Activated CD8-positive, alpha-beta T cell treated with anti-CD3 and anti-CD28 coated beads for 36 hours (primary cell): ENCODE measurements at regions of chr2 and their contacts with region 1.

Region 1: DNA sequence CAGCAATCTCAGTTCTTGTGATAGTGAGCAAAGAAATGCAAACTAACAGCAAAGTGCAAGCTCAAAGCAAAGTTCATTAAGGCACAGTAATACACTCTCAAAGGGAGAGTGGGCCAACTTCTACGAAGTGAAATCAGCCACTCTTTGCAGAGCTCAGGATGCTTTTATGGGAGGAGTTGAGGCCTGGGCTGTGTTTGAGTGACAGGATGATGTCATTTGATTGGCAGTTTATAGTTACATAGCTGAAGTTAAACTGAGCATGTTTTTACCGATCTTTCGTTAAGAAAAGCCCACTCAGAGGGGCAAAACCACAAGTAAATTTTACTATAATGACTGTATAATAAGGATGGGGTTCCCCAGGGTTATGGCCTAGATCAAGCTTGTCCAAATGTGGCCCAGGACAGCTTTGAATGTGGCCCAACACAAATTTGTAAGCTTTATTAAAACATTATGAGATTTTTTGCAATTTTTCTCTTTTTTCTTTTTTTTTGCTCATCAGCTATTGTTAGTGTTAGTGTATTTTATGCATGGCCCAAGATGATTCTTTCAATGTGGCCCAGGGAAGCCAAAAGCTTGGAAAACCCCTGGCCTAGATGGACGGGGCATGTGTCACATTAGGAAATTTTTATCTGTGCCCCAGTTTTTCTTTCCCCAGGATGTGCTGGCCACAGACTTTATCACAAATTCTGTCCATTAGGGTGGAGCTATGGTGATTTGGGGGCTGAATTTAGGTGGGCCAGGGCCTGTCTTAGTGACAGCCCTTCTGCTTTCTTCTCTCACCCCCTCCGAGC is 8.3 kb upstream of the DNAH7 start:
- DNase-seq: peak; percentile 18
- ATAC-seq: peak; percentile 56
- H3K4me3 Mint-ChIP-seq: no peak overlapping the region
- H3K27ac Mint-ChIP-seq: no peak overlapping the region
- H3K4me1 Mint-ChIP-seq: peaks cover 29% of the 10 kb centered on the region
- H3K27me3 Mint-ChIP-seq: no peaks in the 10 kb centered on the region
- CTCF ChIP-seq: no peak

Region 2: GRCh38 chr2:196101325-196101991 is 24.5 kb after region 1 on chr2:
- CTCF ChIA-PET with region 1: interaction called, 28 read pairs
- POLR2A ChIA-PET with region 1: no interaction called
- intact Hi-C with region 1: no loop called
- DNase-seq: peak; percentile 71
- ATAC-seq: peak; percentile 95
- H3K4me3 Mint-ChIP-seq: no peak overlapping the region
- H3K27ac Mint-ChIP-seq: peak overlapping the region; percentile 53
- H3K4me1 Mint-ChIP-seq: peaks cover 32% of the 10 kb centered on the region
- H3K27me3 Mint-ChIP-seq: no peaks in the 10 kb centered on the region
- CTCF ChIP-seq: no peak

Region 3: DNA sequence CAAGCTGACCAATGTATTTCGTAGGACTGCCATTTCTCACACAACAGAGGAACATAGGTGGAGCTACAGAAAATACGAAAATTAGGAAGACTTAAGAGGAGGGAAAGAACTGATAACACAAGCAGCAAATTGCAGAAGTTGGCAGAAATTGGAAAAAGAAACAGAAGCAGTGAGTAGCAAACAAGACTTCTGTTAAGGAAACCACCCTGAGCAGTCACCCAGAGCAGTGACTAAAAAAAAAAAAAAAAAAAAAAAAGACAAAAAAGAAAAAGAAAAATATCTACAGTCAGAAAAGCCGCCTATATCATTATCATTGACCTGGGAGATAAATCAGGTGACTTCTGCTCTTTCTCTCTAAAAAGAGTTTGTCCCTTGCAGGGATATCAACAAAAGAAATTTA is 73.0 kb after region 1 on chr2:
- CTCF ChIA-PET with region 1: interaction called, 8 read pairs
- POLR2A ChIA-PET with region 1: interaction called, 3 read pairs
- intact Hi-C with region 1: loop called (anchors 5 kb)
- DNase-seq: no peak
- ATAC-seq: peak; percentile 14
- H3K4me3 Mint-ChIP-seq: peak overlapping the region; percentile 57
- H3K27ac Mint-ChIP-seq: peak overlapping the region; percentile 91
- H3K4me1 Mint-ChIP-seq: peaks cover 83% of the 10 kb centered on the region
- H3K27me3 Mint-ChIP-seq: no peaks in the 10 kb centered on the region
- CTCF ChIP-seq: no peak

Region 4: DNA sequence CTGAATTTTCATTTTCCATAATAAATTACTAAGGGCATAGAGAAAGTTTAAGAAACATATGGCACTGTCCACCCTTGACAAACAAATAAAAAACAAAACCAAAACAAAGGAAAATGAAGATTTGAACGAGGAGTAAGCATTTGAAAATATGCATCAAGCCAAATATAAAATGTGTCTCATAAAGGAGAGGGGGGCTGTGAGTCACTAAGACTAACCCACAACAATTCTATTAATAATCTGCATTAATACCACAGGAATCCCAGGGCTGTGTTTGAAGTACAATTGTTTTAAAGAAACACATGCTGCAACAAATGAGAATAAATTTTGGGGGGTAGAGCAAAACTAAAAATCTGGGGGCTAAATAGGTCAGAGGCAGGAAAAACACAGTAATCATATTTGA is 148.2 kb after region 1 on chr2:
- CTCF ChIA-PET with region 1: interaction called, 16 read pairs
- POLR2A ChIA-PET with region 1: interaction called, 5 read pairs
- intact Hi-C with region 1: no loop called
- DNase-seq: no peak
- ATAC-seq: no peak
- H3K4me3 Mint-ChIP-seq: peak overlapping the region; percentile 22
- H3K27ac Mint-ChIP-seq: peak overlapping the region; percentile 61
- H3K4me1 Mint-ChIP-seq: peaks cover 84% of the 10 kb centered on the region
- H3K27me3 Mint-ChIP-seq: no peaks in the 10 kb centered on the region
- CTCF ChIP-seq: no peak

Region 5: DNA sequence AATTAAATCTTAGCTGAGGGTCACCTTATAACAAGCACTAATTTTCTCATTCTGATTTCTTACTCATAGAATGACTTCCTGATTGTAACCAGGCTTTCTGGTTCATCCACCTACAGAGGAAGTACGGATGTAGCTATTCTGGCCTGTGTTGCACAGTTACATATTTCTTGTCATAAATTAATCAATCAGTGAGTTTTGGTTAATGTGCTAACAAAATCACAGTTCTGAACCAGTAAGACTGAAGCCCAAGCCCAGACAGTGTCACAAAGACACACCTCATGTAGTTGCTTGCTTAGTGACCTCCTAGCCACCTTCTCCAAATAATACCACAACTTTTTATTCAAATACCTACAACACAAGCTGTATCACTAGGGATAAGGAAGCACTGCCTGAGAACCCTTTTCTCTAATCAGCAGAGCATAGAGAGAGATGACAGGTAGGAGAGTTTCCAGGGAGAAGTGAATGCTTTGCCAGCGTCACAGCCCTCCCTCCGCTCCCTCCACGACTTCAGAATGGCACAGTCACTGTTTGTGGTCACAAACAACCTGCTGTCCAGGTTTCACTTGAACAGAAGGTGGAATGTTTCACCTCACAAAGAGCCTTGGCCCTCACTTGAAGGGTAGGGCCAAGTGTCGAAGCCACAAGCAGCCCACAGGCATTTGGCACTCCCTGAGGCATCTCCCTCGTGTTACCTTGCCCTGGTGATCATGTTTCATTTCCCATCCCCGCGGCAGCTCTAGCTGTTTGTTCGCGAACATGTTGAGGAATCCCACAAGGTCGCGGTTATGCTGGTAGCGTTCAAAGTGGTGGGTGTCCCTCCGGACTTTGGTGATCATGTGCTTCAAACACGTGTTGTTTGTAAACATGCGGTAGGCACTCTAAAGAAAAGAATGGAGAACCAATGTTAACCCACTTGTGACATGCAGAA is 215.2 kb after region 1 on chr2:
- CTCF ChIA-PET with region 1: interaction called, 33 read pairs
- POLR2A ChIA-PET with region 1: no interaction called
- intact Hi-C with region 1: no loop called
- DNase-seq: no peak
- ATAC-seq: peak; percentile 18
- H3K4me3 Mint-ChIP-seq: no peak overlapping the region
- H3K27ac Mint-ChIP-seq: no peak overlapping the region
- H3K4me1 Mint-ChIP-seq: peaks cover 44% of the 10 kb centered on the region
- H3K27me3 Mint-ChIP-seq: no peaks in the 10 kb centered on the region
- CTCF ChIP-seq: no peak

Region 6: GRCh38 chr2:196453613-196454047 is 376.7 kb after region 1 on chr2:
- CTCF ChIA-PET with region 1: interaction called, 63 read pairs
- POLR2A ChIA-PET with region 1: interaction called, 3 read pairs
- intact Hi-C with region 1: loop called (anchors 5 kb)
- DNase-seq: peak; percentile 68
- ATAC-seq: peak; percentile 73
- H3K4me3 Mint-ChIP-seq: no peak overlapping the region
- H3K27ac Mint-ChIP-seq: no peak overlapping the region
- H3K4me1 Mint-ChIP-seq: peaks cover 3% of the 10 kb centered on the region
- H3K27me3 Mint-ChIP-seq: peaks cover 17% of the 10 kb centered on the region
- CTCF ChIP-seq: peak; percentile 68